CD4-positive, alpha-beta memory T cell (primary cell): ENCODE measurements at regions of chr10 and their contacts with region 1.

Region 1: DNA sequence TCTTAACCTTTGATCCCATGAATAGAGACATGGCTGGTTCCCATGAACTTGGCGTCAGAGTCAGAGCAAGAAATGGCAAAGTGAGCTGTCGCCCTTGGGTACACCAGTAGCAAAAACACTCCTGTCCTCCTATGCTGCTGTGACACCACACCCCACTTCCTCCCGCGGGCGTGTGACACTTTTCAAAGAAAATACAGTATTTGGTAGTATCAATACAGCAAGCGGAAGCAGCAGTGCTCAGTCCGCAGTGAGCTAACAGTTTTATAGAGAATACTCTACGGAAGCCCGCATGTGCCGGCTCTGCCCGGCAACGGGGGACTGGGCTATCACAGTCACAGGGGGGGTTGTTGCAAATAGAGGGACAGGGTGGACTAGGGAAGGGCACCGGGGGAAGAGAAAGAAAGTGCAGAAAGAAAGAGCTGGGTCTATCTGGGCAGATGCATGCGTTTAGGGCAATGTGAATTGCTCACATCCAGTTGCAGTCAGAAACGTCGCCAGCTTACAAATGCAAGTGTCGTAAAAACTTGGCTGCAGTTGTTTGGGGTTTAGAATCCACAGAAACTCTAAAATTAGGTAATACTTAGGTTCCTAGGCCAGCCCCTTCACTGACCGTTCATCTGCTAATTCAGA is 49.8 kb downstream of the PRKCQ start:
- DNase-seq: peak; percentile 80 to 89 (median 86)
- H3K4me3 ChIP-seq: peak overlapping the region; percentile 35 to 36
- H3K4me3 Mint-ChIP-seq: peak overlapping the region; percentile 87 to 98 (median 90)
- H3K27ac ChIP-seq: peak overlapping the region; percentile 70
- H3K27ac Mint-ChIP-seq: peak overlapping the region; percentile 90 to 100 (median 99)
- H3K4me1 ChIP-seq: peaks cover 86% of the 10 kb centered on the region
- H3K4me1 Mint-ChIP-seq: peaks cover 71 to 91% (median 82%) of the 10 kb centered on the region in 4 donors
- H3K27me3 ChIP-seq: no peaks in the 10 kb centered on the region
- H3K27me3 Mint-ChIP-seq: no peaks in the 10 kb centered on the region

Region 2: GRCh38 chr10:6473901-6474370 is 56.4 kb before region 1 on chr10:
- CTCF ChIA-PET with region 1: interaction called, 3 read pairs
- POLR2A ChIA-PET with region 1: interaction called, 17 read pairs
- intact Hi-C with region 1: loop called (anchors 1 kb)
- DNase-seq: peak; percentile 60 to 74 (median 69)
- H3K4me3 ChIP-seq: peak overlapping the region; percentile 32 to 56
- H3K4me3 Mint-ChIP-seq: peak overlapping the region; percentile 82 to 90 (median 88)
- H3K27ac ChIP-seq: peak overlapping the region; percentile 85
- H3K27ac Mint-ChIP-seq: peak overlapping the region; percentile 93 to 99 (median 95)
- H3K4me1 ChIP-seq: peaks cover 44% of the 10 kb centered on the region
- H3K4me1 Mint-ChIP-seq: peaks cover 43 to 67% (median 56%) of the 10 kb centered on the region in 4 donors
- H3K27me3 ChIP-seq: no peaks in the 10 kb centered on the region
- H3K27me3 Mint-ChIP-seq: no peaks in the 10 kb centered on the region

Region 3: GRCh38 chr10:6514844-6515780 is 15.2 kb before region 1 on chr10:
- CTCF ChIA-PET with region 1: interaction called, 16 read pairs
- POLR2A ChIA-PET with region 1: interaction called, 16 read pairs
- intact Hi-C with region 1: loop called (anchors 1 kb)
- DNase-seq: no peak
- H3K4me3 ChIP-seq: no peak overlapping the region
- H3K4me3 Mint-ChIP-seq: peak overlapping the region in 1 of 8 donors; percentile 11
- H3K27ac ChIP-seq: no peak overlapping the region
- H3K27ac Mint-ChIP-seq: peak overlapping the region in 6 of 7 donors; percentile 21 to 83 (median 68)
- H3K4me1 ChIP-seq: peaks cover 78% of the 10 kb centered on the region
- H3K4me1 Mint-ChIP-seq: peaks cover 63 to 94% (median 75%) of the 10 kb centered on the region in 4 donors
- H3K27me3 ChIP-seq: no peaks in the 10 kb centered on the region
- H3K27me3 Mint-ChIP-seq: no peaks in the 10 kb centered on the region

Region 4: GRCh38 chr10:6553937-6554336 is 23.6 kb after region 1 on chr10:
- CTCF ChIA-PET with region 1: interaction called, 6 read pairs
- POLR2A ChIA-PET with region 1: interaction called, 66 read pairs
- intact Hi-C with region 1: no loop called
- DNase-seq: no peak
- H3K4me3 ChIP-seq: no peak overlapping the region
- H3K4me3 Mint-ChIP-seq: peak overlapping the region in 2 of 8 donors; percentile 33 to 48
- H3K27ac ChIP-seq: no peak overlapping the region
- H3K27ac Mint-ChIP-seq: peak overlapping the region in 5 of 7 donors; percentile 6 to 93 (median 79)
- H3K4me1 ChIP-seq: peaks cover 69% of the 10 kb centered on the region
- H3K4me1 Mint-ChIP-seq: peaks cover 70 to 94% (median 81%) of the 10 kb centered on the region in 4 donors
- H3K27me3 ChIP-seq: no peaks in the 10 kb centered on the region
- H3K27me3 Mint-ChIP-seq: no peaks in the 10 kb centered on the region

Region 5: GRCh38 chr10:6586501-6586900 is 56.2 kb after region 1 on chr10:
- CTCF ChIA-PET with region 1: interaction called, 40 read pairs
- POLR2A ChIA-PET with region 1: interaction called, 161 read pairs
- intact Hi-C with region 1: no loop called
- DNase-seq: peak in 1 of 5 donors; percentile 46
- H3K4me3 ChIP-seq: peak overlapping the region in 1 of 2 donors; percentile 41
- H3K4me3 Mint-ChIP-seq: peak overlapping the region; percentile 90 to 99 (median 94)
- H3K27ac ChIP-seq: peak overlapping the region; percentile 29
- H3K27ac Mint-ChIP-seq: peak overlapping the region; percentile 82 to 93 (median 90)
- H3K4me1 ChIP-seq: peaks cover 91% of the 10 kb centered on the region
- H3K4me1 Mint-ChIP-seq: peaks cover 61 to 98% (median 84%) of the 10 kb centered on the region in 4 donors
- H3K27me3 ChIP-seq: no peaks in the 10 kb centered on the region
- H3K27me3 Mint-ChIP-seq: no peaks in the 10 kb centered on the region